ENCODE measurements at regions of chr11 and their contacts with region 1.

Region 1: DNA sequence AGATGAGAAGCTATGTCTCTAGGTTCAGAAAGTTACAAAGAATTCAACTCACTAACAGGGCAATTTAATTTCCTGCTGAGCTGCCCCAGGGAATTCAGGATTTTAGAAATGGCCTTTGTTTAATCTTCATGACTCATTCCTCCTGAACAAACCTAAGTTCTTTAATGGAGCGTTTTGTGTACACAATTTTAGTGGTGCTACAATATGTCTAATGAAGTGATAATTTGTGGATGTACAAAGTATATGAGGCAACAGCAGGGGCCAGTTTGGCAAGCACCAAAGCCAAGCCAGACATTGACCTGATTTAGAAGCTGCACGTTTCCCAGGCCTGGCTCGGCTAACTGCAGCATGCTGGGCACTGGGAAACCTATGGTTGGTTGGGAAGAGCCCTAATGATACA is 34.4 kb upstream of the HEPHL1 start:
- DNase-seq: peak; percentile 91
- ATAC-seq: peak; percentile 87
- H3K4me3 ChIP-seq: no peak overlapping the region
- H3K27ac ChIP-seq: peak overlapping the region; percentile 85
- H3K4me1 ChIP-seq: peaks cover 31% of the 10 kb centered on the region
- H3K27me3 ChIP-seq: no peaks in the 10 kb centered on the region
- CTCF ChIP-seq: no peak

Region 2: GRCh38 chr11:93908689-93909088 is 78.0 kb before region 1 on chr11:
- CTCF ChIA-PET with region 1: interaction called, 3 read pairs
- POLR2A ChIA-PET with region 1: no interaction called
- intact Hi-C with region 1: loop called (anchors 5 kb)
- DNase-seq: peak; percentile 93
- ATAC-seq: peak; percentile 64
- H3K4me3 ChIP-seq: no peak overlapping the region
- H3K27ac ChIP-seq: peak overlapping the region; percentile 72
- H3K4me1 ChIP-seq: peaks cover 47% of the 10 kb centered on the region
- H3K27me3 ChIP-seq: no peaks in the 10 kb centered on the region
- CTCF ChIP-seq: no peak

Region 3: GRCh38 chr11:93929407-93929806 is 57.3 kb before region 1 on chr11:
- CTCF ChIA-PET with region 1: no interaction called
- POLR2A ChIA-PET with region 1: no interaction called
- intact Hi-C with region 1: loop called (anchors 2 kb)
- DNase-seq: peak; percentile 90
- ATAC-seq: peak; percentile 92
- H3K4me3 ChIP-seq: no peak overlapping the region
- H3K27ac ChIP-seq: peak overlapping the region; percentile 90
- H3K4me1 ChIP-seq: peaks cover 15% of the 10 kb centered on the region
- H3K27me3 ChIP-seq: no peaks in the 10 kb centered on the region
- CTCF ChIP-seq: no peak

Region 4: GRCh38 chr11:93952082-93952780 is 34.5 kb before region 1 on chr11:
- CTCF ChIA-PET with region 1: no interaction called
- POLR2A ChIA-PET with region 1: no interaction called
- intact Hi-C with region 1: loop called (anchors 1 kb)
- DNase-seq: no peak
- ATAC-seq: no peak
- H3K4me3 ChIP-seq: no peak overlapping the region
- H3K27ac ChIP-seq: no peak overlapping the region
- H3K4me1 ChIP-seq: peaks cover 20% of the 10 kb centered on the region
- H3K27me3 ChIP-seq: no peaks in the 10 kb centered on the region
- CTCF ChIP-seq: no peak

Region 5: GRCh38 chr11:93959663-93960062 is 27.1 kb before region 1 on chr11:
- CTCF ChIA-PET with region 1: no interaction called
- POLR2A ChIA-PET with region 1: no interaction called
- intact Hi-C with region 1: loop called (anchors 2 kb)
- DNase-seq: no peak
- ATAC-seq: no peak
- H3K4me3 ChIP-seq: no peak overlapping the region
- H3K27ac ChIP-seq: no peak overlapping the region
- H3K4me1 ChIP-seq: no peaks in the 10 kb centered on the region
- H3K27me3 ChIP-seq: no peaks in the 10 kb centered on the region
- CTCF ChIP-seq: no peak

Region 6: DNA sequence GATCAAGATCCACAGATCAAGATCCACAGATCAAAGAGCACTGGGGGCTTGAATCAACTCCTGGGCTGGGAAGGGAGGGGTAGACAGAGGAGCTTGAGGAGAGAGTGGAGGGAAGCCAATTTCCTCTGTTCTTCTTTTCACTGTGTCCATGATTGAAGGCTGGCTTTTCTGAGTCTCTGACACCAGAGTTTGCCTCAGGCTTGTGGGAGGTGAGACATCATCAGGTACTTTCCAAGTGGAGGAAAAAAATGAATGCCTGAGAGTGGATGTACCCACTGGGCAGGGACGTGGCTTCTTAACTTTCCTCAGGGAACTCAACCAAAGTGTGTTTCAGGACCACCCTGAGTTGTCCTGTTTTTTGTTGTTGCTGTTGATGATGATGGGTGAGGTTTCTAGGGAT is 23.4 kb after region 1 on chr11:
- CTCF ChIA-PET with region 1: no interaction called
- POLR2A ChIA-PET with region 1: no interaction called
- intact Hi-C with region 1: no loop called
- DNase-seq: peak; percentile 33
- ATAC-seq: no peak
- H3K4me3 ChIP-seq: no peak overlapping the region
- H3K27ac ChIP-seq: no peak overlapping the region
- H3K4me1 ChIP-seq: peaks cover 14% of the 10 kb centered on the region
- H3K27me3 ChIP-seq: no peaks in the 10 kb centered on the region
- CTCF ChIP-seq: no peak

Region 7: DNA sequence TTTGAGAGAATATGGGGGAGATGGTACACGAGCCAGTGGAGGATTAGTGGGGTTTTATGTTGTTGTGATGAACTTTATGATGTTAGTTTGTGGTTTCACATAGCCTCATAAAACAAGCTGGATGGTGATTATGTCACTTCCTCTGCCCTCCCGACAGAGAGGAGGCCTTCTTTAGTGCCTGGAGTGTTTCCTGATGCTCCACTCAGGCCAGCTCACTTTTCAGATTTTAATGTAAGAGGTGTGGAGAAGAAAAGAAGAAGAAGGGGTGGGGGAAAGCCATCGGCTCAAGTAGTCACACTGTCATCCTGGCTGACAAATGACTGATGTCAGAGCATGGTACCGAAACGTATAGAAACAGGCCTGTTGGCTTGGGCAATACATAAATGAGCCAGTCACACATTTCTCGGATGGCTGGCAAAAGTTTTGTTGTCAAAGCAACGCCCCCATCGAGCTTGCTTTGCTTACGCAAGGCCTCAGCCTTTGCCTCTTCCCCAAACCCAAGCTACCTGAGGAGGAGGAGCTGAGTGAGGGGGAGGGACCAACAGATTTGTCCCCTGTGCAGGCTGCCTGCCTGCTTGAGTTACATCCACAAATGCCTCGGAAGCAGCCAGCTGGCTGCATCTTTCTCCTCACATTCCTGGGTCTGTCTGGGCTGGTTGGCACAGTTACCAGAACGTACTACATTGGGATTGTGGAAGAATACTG is 34.2 kb after region 1 on chr11 and contains the start of gene HEPHL1:
- CTCF ChIA-PET with region 1: no interaction called
- POLR2A ChIA-PET with region 1: no interaction called
- intact Hi-C with region 1: loop called (anchors 2 kb)
- DNase-seq: peak; percentile 94
- ATAC-seq: peak; percentile 83
- H3K4me3 ChIP-seq: peak within 1 kb of the TSS; percentile 2; the same call in 1 of the 2 replicates
- H3K27ac ChIP-seq: peak within 1 kb of the TSS; percentile 69
- H3K4me1 ChIP-seq: peaks cover 61% of the 10 kb centered on the region
- H3K27me3 ChIP-seq: no peaks in the 10 kb centered on the region
- CTCF ChIP-seq: no peak
- total RNA-seq, gene HEPHL1: 3.3 and 4.4 TPM in 2 replicates